HEK293T (cell line): ENCODE measurements at regions of chr14 and their contacts with region 1.

Region 1: GRCh38 chr14:67541448-67542387 is 8.6 kb downstream of the PLEKHH1 start:
- DNase-seq: no peak

Region 2: GRCh38 chr14:67467179-67468080 is 74.3 kb before region 1 on chr14:
- CTCF ChIA-PET with region 1: interaction called, 10 read pairs
- POLR2A ChIA-PET with region 1: no interaction called
- DNase-seq: no peak

Region 3: DNA sequence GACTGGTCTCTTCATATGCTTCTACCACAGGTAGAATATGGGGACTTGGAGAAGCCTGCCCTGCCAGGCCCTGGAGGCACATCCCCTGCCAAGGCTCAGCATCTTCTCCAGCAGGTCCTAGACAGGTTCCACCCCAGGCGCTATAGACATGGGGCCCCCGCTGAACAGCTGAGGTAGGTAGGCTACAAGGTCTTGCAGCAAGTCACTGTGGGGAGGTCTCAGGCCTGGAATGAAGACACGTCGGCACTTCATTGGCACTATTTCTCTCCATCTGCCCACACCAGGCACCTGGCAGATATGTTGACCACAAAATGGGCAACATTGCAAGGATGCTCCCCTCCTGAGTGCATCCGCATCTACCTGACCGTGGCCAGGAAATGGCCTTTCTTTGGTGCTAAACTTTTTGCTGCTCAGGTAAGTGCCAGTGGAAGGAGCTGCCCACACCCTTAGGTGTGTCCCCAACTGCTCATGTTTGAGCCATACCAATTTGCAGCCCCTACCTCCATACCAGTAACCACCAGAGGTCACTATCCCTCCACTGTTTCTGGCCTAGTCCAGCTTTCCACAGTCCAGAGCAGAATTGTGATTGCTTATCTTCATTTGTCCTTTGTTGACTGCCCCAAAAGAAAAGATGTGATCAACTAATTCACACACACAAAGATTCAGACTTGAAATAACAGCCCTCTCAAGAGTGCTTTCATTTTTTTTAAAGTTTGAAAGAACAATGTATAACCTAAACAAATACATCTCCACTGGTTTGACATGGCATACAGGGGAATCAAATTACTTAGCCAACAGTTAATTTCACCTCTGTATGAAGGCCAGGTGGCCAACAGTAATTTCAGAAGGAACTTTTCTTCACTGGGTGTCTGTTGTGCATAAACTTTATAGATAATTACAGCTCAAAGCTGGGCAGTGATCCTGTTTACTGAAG is 42.3 kb after region 1 on chr14:
- CTCF ChIA-PET with region 1: no interaction called
- POLR2A ChIA-PET with region 1: no interaction called
- DNase-seq: peak; percentile 74